Activated CD4-positive, alpha-beta T cell treated with anti-CD3 and anti-CD28 coated beads, Interleukin-2, amount 10 ng/mL, durations not matched to agents 7 days and 5 days (primary cell): ENCODE measurements at regions of chr18 and their contacts with region 1.

Region 1: DNA sequence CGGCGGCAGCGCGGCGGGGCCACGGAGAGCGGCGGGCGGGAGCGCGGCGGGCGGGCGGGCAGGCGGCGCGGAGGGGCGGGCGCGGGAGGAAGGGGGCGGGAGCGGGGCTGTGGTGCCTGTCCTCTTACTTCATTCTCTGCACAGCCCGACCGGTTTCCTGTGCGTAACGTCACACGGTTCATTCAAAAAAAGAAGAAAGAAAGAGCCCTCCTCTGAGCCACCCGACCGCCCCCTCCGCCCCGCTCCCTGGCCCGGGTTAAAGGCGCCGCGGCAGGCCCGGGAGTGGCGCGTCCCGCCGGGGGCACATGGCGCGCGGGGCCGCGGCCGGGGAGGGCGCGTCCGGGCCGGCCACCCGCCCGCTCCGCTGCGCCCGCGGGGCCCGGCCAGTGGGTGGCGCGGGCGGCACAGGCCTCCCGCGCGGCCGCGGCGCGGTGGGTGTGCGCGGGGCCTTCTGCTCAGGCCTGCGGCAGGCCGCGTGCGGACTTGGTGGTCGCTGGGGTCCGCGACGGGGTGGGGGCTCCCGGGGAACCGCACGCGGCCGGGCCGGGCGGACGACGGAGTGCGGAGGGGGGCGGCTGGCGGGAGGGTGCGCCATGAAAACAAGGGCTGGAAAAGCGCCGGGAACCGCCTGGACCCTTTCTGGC is 599 bp upstream of the BCL2 start:
- DNase-seq: peak; percentile 92
- H3K4me3 Mint-ChIP-seq: peak overlapping the region; percentile 99
- H3K27ac Mint-ChIP-seq: peak overlapping the region; percentile 91
- H3K4me1 Mint-ChIP-seq: peaks cover 27% of the 10 kb centered on the region
- H3K27me3 Mint-ChIP-seq: no peaks in the 10 kb centered on the region

Region 2: DNA sequence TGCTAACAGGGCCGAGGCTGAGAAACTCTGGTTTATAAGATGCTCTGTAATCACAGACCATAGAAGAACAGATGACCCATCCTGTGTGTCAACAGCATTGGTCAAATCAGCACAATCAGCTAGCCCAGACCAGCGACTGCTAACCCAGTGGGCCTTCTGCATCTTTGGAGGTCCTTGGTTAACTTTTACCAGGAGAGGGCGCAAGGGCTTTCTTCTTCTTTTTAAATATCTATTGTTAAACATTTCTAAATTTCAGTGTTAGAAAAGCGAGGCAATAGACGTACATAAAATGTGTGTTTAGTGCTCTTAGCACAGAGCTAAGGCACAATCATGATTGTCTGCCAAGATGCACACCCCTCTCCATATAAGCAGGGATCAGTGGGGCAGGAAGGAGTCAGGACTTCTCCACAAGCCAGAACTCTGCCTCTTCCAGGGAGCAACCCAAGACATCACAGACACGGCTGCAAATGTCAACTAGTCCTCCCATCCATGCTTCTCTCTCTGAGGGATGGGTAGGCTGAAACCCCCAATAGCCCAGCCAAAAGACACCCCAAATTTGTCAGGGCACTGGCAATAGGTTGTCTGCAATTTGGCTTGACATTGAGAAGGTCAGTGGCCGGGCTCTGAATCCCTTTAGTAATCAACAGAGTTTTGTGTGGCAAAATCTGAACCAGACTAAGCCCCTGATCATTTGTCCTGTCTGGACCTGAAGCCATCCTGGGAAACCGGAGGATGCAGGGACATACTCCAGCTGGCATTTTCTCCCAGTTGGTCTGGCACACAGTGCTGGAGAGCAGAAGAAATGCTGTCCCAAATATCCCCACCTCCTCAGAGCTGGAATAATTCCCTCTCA is 188.8 kb before region 1 on chr18:
- CTCF ChIA-PET with region 1: interaction called, 19 read pairs
- POLR2A ChIA-PET with region 1: interaction called, 3 read pairs
- DNase-seq: peak; percentile 70
- H3K4me3 Mint-ChIP-seq: no peak overlapping the region
- H3K27ac Mint-ChIP-seq: peak overlapping the region; percentile 54
- H3K4me1 Mint-ChIP-seq: peaks cover 43% of the 10 kb centered on the region
- H3K27me3 Mint-ChIP-seq: no peaks in the 10 kb centered on the region

Region 3: GRCh38 chr18:63155169-63155852 is 164.9 kb before region 1 on chr18:
- CTCF ChIA-PET with region 1: interaction called, 37 read pairs
- POLR2A ChIA-PET with region 1: no interaction called
- DNase-seq: peak; percentile 86
- H3K4me3 Mint-ChIP-seq: peak overlapping the region; percentile 70
- H3K27ac Mint-ChIP-seq: peak overlapping the region; percentile 90
- H3K4me1 Mint-ChIP-seq: peaks cover 99% of the 10 kb centered on the region
- H3K27me3 Mint-ChIP-seq: no peaks in the 10 kb centered on the region

Region 4: DNA sequence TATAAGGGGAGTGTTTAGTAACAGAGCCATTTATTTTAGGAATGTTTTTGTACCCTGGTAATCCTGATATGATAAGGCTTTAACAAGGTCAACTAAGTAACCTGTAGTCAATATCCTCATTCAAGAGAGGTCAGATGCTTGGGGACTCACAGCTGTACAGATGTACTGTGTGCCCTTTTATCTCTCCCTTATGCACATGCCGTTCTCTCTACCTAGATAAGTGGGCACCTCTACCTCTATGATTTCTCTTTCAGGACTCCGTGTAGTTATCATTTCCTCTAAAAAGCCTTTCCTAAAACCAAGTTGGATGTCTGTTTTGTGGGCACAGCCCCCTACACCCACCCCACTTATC is 133.0 kb before region 1 on chr18:
- CTCF ChIA-PET with region 1: no interaction called
- POLR2A ChIA-PET with region 1: no interaction called
- DNase-seq: no peak
- H3K4me3 Mint-ChIP-seq: no peak overlapping the region
- H3K27ac Mint-ChIP-seq: no peak overlapping the region
- H3K4me1 Mint-ChIP-seq: peaks cover 72% of the 10 kb centered on the region
- H3K27me3 Mint-ChIP-seq: no peaks in the 10 kb centered on the region

Region 5: DNA sequence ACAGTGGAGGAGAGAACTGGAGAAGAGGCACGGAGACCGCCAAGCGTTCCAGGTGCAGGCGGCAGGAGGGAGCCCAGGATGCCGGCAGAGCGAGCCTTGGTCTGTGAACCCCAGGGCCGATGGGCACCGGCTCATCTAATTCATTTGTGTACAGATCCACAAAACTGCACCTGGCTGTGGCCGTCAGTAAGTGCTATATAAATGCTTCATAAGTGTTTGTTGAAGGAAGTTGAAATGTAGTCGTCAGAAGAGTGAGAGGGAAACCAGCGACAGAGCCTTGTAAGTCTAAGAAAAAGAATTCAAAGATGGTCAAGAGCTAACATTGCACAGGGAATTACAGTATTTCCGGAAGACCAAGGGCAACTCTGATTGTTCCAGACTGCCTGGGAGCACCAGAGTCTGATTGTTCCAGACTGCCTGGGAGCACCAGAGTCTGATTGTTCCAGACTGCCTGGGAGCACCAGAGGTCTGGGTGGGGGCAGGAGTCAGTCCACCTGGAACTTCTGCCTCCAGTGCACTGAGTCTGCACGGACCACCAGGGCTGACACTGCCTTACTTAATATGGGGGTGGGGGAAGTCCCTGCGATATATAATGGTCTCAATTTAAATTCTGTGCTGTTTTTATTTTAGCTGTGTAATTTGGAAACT is 112.9 kb before region 1 on chr18:
- CTCF ChIA-PET with region 1: interaction called, 10 read pairs
- POLR2A ChIA-PET with region 1: no interaction called
- DNase-seq: no peak
- H3K4me3 Mint-ChIP-seq: peak overlapping the region; percentile 70
- H3K27ac Mint-ChIP-seq: peak overlapping the region; percentile 93
- H3K4me1 Mint-ChIP-seq: peaks cover 95% of the 10 kb centered on the region
- H3K27me3 Mint-ChIP-seq: no peaks in the 10 kb centered on the region

Region 6: DNA sequence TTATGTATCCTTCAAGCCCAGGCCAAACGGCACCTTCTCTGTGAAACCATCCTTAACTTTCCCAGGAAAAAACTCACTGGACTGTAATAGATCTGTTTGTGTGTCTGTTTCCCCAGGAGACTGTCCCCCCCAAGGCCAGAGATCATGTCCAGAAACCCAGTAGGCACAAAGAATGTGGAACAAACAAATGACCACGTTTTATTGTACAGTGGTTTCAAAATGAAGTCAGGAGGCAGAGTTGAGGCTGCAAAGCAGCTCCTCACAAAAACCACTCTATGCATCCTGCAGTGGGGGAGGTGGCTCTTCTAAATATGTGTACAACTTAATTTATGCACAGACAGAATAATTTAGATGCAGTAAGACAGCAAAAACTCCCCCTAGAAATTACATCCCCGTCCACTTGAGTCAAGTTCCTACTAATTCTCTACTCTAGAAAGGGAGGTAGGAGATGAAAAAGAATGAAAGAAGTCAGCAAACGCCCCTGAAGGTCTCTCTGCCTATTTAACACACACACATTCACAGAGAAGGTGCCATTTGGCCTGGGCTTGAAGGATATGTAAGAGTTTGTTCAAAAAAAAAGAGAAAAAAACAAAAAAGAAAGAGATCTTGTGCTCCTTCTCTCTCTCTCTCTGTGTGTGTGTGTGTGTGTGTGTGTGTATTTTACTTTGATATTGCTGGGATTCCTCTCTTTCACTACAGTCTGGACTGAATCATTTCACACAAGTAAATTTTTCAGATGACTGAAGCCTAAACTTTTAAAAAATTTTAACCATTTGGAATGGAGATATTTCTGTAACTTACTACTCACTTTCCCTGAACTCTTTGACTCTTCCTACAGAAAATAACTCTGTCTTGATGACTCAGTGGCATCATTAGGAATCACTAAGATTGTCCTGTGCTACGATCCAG is 20.1 kb before region 1 on chr18:
- CTCF ChIA-PET with region 1: interaction called, 22 read pairs
- POLR2A ChIA-PET with region 1: interaction called, 5 read pairs
- DNase-seq: peak; percentile 59
- H3K4me3 Mint-ChIP-seq: peak overlapping the region; percentile 55
- H3K27ac Mint-ChIP-seq: peak overlapping the region; percentile 90
- H3K4me1 Mint-ChIP-seq: peaks cover 86% of the 10 kb centered on the region
- H3K27me3 Mint-ChIP-seq: no peaks in the 10 kb centered on the region

Region 7: DNA sequence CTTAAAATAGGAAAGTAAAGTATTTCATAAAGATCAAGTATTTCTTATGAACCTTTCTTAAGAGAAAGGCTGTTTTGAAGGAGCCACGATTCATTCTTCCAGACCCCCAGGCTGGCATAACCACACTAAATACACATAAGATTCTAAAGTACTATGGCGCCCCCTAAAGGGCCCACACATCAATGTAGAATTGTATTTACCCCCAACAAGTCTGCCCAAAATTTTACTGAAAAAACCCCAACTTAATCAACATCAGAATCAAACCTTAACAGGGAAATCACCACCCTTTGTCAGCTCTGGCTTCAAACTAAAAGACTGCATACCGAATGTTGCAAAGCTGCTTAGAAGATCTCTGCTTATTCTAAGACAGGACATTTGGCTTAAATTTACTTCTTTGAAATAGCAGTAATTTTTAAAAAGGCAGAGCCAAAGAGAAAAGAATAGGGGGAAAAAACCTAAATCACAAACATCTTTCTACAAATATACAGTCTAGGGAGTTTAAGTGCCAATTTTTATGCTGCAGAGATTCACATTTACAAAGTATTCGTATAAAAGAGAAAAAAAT is 19.8 kb after region 1 on chr18:
- CTCF ChIA-PET with region 1: interaction called, 15 read pairs
- POLR2A ChIA-PET with region 1: no interaction called
- DNase-seq: peak; percentile 58
- H3K4me3 Mint-ChIP-seq: no peak overlapping the region
- H3K27ac Mint-ChIP-seq: no peak overlapping the region
- H3K4me1 Mint-ChIP-seq: peaks cover 2% of the 10 kb centered on the region
- H3K27me3 Mint-ChIP-seq: no peaks in the 10 kb centered on the region

Region 8: DNA sequence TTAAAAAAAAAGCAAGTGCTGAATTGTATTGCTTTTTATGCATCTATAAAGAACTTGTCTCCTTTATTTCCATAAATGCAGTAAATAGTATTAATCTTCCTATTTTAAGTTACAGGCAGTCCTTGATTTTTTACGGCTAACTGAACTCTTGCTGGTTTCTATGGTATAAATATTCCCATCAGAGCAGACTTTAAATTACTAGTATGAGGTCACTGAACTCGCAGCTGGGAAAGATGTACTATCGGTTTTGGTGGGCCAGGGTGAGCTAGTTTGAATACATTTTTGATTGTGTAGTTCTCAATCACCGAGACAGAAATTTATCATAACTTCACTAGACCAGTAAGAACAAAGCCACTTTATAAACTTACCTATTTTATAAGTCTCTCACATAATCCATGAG is 67.7 kb after region 1 on chr18:
- CTCF ChIA-PET with region 1: no interaction called
- POLR2A ChIA-PET with region 1: no interaction called
- DNase-seq: no peak
- H3K4me3 Mint-ChIP-seq: no peak overlapping the region
- H3K27ac Mint-ChIP-seq: no peak overlapping the region
- H3K4me1 Mint-ChIP-seq: no peaks in the 10 kb centered on the region
- H3K27me3 Mint-ChIP-seq: no peaks in the 10 kb centered on the region

Region 9: DNA sequence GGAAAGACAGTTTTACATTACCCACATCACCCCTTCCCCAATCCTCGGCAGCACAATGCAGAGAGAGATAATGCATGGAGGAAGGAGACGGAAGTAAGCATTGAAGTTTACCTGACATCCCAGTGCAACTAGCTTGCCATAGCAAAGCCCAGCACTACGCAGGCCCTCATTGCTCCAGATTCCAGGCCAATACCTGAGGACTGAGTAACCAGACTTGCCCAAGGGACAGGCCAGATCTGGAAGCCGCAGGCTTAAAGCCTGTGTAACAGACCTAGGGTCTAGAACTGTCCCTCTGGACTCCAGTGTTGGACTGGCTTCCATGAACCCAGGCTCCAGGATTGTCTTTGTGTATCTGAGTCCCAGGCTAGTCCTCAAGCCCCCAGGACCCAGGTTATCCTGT is 306.3 kb after region 1 on chr18:
- CTCF ChIA-PET with region 1: no interaction called
- POLR2A ChIA-PET with region 1: no interaction called
- DNase-seq: no peak
- H3K4me3 Mint-ChIP-seq: no peak overlapping the region
- H3K27ac Mint-ChIP-seq: no peak overlapping the region
- H3K4me1 Mint-ChIP-seq: no peaks in the 10 kb centered on the region
- H3K27me3 Mint-ChIP-seq: no peaks in the 10 kb centered on the region